ENCODE measurements at regions of chr15 and their contacts with region 1.

Region 1: GRCh38 chr15:99104788-99105513 is at the start of gene SYNM:
- DNase-seq: peak; percentile 64
- ATAC-seq: peak; percentile 63
- H3K4me3 Mint-ChIP-seq: peak within 1 kb of the TSS; percentile 51
- H3K27ac Mint-ChIP-seq: no peak within 1 kb of the TSS
- H3K4me1 Mint-ChIP-seq: no peaks in the 10 kb centered on the region
- H3K27me3 Mint-ChIP-seq: peaks cover 39% of the 10 kb centered on the region
- total RNA-seq, gene SYNM: 0.09 to 0.14 TPM

Region 2: GRCh38 chr15:99213187-99213811 is 108.3 kb after region 1 on chr15:
- CTCF ChIA-PET with region 1: interaction called, 8 read pairs
- POLR2A ChIA-PET with region 1: no interaction called
- intact Hi-C with region 1: loop called (anchors 1 kb)
- DNase-seq: peak; percentile 81
- ATAC-seq: peak; percentile 65
- H3K4me3 Mint-ChIP-seq: no peak overlapping the region
- H3K27ac Mint-ChIP-seq: no peak overlapping the region
- H3K4me1 Mint-ChIP-seq: no peaks in the 10 kb centered on the region
- H3K27me3 Mint-ChIP-seq: no peaks in the 10 kb centered on the region

Measured in activated CD4-positive, alpha-beta T cell treated with anti-CD3 and anti-CD28 coated beads for 36 hours (primary cell).